AG04450 (cell line): ENCODE measurements at regions of chr17 and their contacts with region 1.

Region 1: GRCh38 chr17:49677933-49678847 is at the start of gene SPOP:
- DNase-seq: peak; percentile 99
- H3K4me3 ChIP-seq: peak within 1 kb of the TSS; percentile 78
- H3K27ac ChIP-seq: peak within 1 kb of the TSS; percentile 83
- H3K27me3 ChIP-seq: no peaks in the 10 kb centered on the region
- CTCF ChIP-seq: no peak
- polyA plus RNA-seq, gene SPOP: 51.6 and 52.1 TPM in 2 replicates

Region 2: DNA sequence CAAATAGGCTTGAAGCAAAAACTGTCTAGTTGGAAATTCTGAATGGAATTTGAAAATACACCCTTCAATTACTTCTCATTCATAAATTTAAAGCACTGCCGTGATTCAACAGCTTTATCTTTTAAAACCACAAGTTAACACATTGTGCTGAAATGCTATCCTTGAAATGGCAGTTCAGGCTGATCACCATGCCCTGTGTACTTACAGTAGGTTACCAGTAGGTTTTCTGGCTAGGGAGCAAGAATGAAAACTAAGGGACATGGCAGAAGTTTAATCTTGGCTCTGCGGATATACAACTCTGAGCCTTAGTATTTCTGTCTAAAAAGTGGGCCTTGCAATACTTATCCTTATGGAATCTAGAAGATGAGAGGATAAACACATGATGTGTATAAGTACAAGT is 74.5 kb before region 1 on chr17:
- CTCF ChIA-PET with region 1: interaction called, 11 read pairs
- POLR2A ChIA-PET with region 1: no interaction called
- DNase-seq: no peak
- H3K4me3 ChIP-seq: no peak overlapping the region
- H3K27ac ChIP-seq: no peak overlapping the region
- H3K27me3 ChIP-seq: no peaks in the 10 kb centered on the region
- CTCF ChIP-seq: peak; percentile 13; the same call in 1 of the 2 replicates